K562 (cell line): ENCODE measurements at regions of chr14 and their contacts with region 1.

Region 1: DNA sequence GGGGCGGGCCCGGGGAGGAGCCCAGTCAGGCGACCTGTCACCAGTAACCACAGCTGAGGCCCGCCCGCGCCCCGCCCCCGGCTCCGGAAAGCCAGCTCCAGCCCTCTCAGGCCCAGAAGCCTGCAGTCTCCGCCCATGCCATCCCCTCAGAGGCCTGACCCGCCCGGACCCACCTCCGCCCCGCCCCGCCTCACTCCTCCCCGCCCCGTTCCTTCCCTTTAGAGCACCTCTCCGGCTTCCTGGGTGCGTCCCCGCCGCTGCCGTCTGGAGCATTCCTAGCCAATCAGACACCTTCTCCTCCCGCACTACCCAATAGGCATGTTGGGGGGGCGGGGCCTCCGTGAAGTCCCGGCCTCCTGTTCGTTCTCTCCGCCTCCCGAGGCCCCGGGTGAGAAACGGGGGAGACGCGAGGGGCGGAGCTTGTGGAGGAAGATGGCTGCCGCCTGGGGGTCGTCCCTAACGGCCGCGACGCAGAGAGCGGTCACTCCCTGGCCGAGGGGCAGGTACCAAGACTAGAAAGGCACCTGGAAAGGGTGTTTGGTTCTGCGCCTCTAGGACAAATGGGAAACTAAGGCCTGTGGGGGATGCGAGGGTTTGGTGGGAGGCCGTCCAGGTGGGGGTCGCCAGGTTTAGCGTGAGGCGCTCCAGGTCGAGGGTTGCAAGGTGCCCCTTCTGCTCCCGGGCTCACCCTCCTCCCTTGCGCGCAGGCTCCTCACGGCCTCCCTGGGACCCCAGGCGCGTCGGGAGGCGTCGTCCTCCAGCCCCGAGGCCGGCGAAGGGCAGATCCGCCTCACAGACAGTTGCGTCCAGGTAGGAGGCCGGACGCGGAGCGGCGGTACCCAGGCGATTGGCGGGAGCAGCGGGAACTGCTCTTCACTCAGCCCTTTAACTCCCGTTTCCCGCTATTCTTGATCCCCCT is at the start of gene ISCA2:
- DNase-seq: peak; percentile 93 to 98 (median 95)
- ATAC-seq: peak; percentile 97
- H3K4me3 ChIP-seq: peak within 1 kb of the TSS; percentile 89
- H3K27ac ChIP-seq: peak within 1 kb of the TSS; percentile 88
- H3K4me1 ChIP-seq: peaks cover 10 to 14% of the 10 kb centered on the region in 2 experiments; a peak in 4 of 5 replicates
- H3K27me3 ChIP-seq: no peaks in the 10 kb centered on the region
- CTCF ChIP-seq: no peak
- EP300 ChIP-seq: no peak
- POLR2A ChIP-seq: peak; percentile 79
- RAD21 ChIP-seq: no peak
- polyA plus RNA-seq, gene ISCA2: 5.0 to 9.9 TPM

Region 2: GRCh38 chr14:74029136-74029535 is 464.5 kb before region 1 on chr14:
- CTCF ChIA-PET with region 1: no interaction called
- POLR2A ChIA-PET with region 1: no interaction called
- in situ Hi-C with region 1: no loop called
- intact Hi-C with region 1: no loop called
- DNase-seq: no peak
- ATAC-seq: no peak
- H3K4me3 ChIP-seq: no peak overlapping the region
- H3K27ac ChIP-seq: no peak overlapping the region
- H3K4me1 ChIP-seq: no peaks in the 10 kb centered on the region
- H3K27me3 ChIP-seq: no peaks in the 10 kb centered on the region
- CTCF ChIP-seq: no peak
- EP300 ChIP-seq: no peak
- POLR2A ChIP-seq: no peak
- RAD21 ChIP-seq: no peak

Region 3: DNA sequence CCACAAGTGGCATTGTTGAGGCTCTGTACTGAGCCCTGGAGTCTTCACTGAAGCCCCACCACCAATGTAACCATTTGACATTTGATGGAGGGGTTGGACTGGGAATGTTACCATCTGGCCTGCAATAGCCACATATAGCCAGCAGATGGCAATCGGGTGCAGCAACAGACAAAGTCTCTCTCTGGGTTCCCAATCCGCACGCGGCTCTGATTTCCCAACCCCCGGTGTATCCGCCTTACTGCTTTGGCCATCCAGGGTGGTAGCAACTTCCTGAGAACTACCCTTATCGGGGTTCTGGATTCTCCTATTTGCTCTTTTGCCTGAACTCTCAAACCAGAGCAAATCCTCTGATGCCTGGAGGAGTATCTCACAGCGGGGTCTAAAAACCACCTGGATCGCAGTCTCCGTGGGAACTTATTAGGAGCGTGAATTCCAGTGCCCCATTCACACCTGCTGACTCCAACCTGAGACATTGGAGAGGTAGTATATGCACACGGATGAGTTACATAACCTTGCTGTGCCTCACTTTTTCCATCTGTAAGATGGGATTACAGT is 131.2 kb before region 1 on chr14:
- CTCF ChIA-PET with region 1: interaction called, 3 read pairs
- POLR2A ChIA-PET with region 1: no interaction called
- in situ Hi-C with region 1: no loop called
- intact Hi-C with region 1: loop called (anchors 5 kb)
- DNase-seq: peak; percentile 67 to 74 (median 70)
- ATAC-seq: peak; percentile 90
- H3K4me3 ChIP-seq: no peak overlapping the region
- H3K27ac ChIP-seq: no peak overlapping the region
- H3K4me1 ChIP-seq: peaks cover 0 to 3% of the 10 kb centered on the region in 2 experiments; a peak in 1 of 5 replicates
- H3K27me3 ChIP-seq: peaks cover 9 to 27% of the 10 kb centered on the region in 2 experiments; a peak in 4 of 5 replicates
- CTCF ChIP-seq: peak; percentile 75 to 84 (median 77)
- EP300 ChIP-seq: no peak
- POLR2A ChIP-seq: no peak
- RAD21 ChIP-seq: peak; percentile 53 to 81

Region 4: GRCh38 chr14:74459289-74459946 is 34.2 kb before region 1 on chr14:
- CTCF ChIA-PET with region 1: no interaction called
- POLR2A ChIA-PET with region 1: no interaction called
- in situ Hi-C with region 1: no loop called
- intact Hi-C with region 1: loop called (anchors 5 kb)
- DNase-seq: peak; percentile 41 to 53 (median 46)
- ATAC-seq: peak; percentile 99
- H3K4me3 ChIP-seq: no peak overlapping the region
- H3K27ac ChIP-seq: no peak overlapping the region
- H3K4me1 ChIP-seq: no peaks in the 10 kb centered on the region; a peak in 1 of 5 replicates
- H3K27me3 ChIP-seq: peaks cover 7 to 68% of the 10 kb centered on the region in 2 experiments; a peak in 4 of 5 replicates
- CTCF ChIP-seq: peak; percentile 57 to 64 (median 63)
- EP300 ChIP-seq: no peak
- POLR2A ChIP-seq: no peak
- RAD21 ChIP-seq: peak in 1 of 2 experiments; percentile 45; a peak in 2 of 4 replicates